ENCODE measurements at regions of chr1 and their contacts with region 1.

Region 1: GRCh38 chr1:210448297-210448892 is 119.7 kb downstream of the HHAT start:
- DNase-seq: peak; percentile 49
- ATAC-seq: no peak
- H3K4me3 Mint-ChIP-seq: no peak overlapping the region
- H3K27ac Mint-ChIP-seq: no peak overlapping the region
- H3K4me1 Mint-ChIP-seq: peaks cover 28% of the 10 kb centered on the region
- H3K27me3 Mint-ChIP-seq: peaks cover 2% of the 10 kb centered on the region

Region 2: DNA sequence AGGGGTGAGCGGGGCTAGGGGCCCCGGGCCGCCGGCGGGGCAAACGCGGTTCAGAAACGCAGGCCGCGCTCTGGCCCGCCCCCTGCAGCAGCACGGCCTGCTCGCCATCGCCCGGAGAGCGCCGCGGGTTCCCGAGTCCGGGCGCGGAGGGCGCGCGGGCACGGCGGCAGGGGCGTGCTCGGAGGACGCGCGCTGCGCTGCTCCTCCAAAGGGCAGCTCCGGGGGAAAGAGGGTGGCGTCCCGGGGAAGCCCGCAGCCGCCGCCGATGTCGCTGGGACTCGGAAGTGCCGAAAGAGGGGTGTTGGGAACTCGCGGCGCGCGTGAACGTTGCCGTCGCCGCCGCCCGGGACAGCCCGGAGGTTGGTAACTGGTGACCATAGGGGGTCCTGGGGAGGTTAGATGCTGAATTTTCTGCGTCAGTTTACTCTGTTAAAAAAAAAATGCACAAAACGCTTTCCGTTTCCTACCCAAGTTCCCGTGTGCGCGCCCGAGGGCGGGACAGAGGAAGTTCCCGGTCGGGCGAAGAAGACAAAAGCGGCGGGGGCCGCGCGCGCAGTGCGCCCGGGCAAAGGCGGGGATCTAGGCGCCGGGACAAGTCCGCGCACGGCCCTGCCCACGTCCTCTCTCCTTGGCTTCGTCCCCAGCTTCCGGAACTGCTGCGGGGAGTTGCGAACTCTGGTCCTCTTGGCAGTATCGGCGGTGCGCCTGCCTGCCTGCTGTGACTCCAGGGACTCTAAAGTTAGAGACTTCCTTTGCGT is 119.5 kb before region 1 on chr1 and contains the start of gene HHAT:
- CTCF ChIA-PET with region 1: interaction called, 7 read pairs
- POLR2A ChIA-PET with region 1: interaction called, 6 read pairs
- intact Hi-C with region 1: loop called in 1 of 2 experiments (anchors 1 kb)
- DNase-seq: peak; percentile 80
- ATAC-seq: peak; percentile 34
- H3K4me3 Mint-ChIP-seq: peak within 1 kb of the TSS; percentile 82
- H3K27ac Mint-ChIP-seq: peak within 1 kb of the TSS; percentile 95
- H3K4me1 Mint-ChIP-seq: peaks cover 36% of the 10 kb centered on the region
- H3K27me3 Mint-ChIP-seq: peaks cover 3% of the 10 kb centered on the region
- total RNA-seq, gene HHAT: 0.82 to 0.84 TPM

Region 3: DNA sequence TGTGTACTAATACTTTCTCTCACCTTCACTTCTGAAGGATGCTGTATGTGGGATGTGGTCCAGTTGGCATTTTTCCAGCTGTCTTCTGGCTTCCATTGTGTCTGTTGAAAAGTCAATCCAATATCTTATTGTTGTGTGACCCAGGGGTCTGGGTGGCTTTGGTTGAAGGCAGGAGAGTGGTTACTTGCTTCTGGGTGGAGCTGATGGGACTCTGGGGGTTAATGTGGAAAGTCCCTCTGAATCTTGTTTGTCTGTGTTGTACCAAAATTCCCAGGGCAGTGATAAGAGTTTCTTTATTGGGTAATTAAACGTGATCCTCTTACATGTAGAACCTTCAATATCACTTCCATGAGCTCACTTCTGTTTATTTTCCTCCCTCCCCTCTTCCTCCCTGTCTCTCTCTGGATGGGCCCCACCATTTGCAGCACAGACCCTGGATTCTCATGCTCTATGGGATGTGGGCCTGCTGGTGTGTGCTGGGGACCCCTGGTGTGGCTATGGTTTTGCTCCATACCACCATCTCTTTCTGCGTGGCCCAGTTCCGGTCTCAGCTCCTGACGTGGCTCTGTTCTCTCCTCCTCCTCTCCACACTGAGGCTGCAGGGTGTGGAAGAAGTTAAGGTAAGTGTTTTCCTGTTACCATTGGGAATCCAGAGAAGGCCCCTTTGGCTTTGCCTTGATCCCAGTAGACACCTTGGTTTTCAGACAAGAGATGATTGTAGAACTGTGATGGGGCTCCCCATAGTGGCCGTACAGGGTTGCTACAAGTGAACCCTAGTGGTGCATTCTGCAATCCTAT is 48.2 kb before region 1 on chr1:
- CTCF ChIA-PET with region 1: interaction called, 28 read pairs
- POLR2A ChIA-PET with region 1: no interaction called
- intact Hi-C with region 1: loop called in 1 of 2 experiments (anchors 1 kb)
- DNase-seq: peak; percentile 76
- ATAC-seq: peak; percentile 79
- H3K4me3 Mint-ChIP-seq: no peak overlapping the region
- H3K27ac Mint-ChIP-seq: peak overlapping the region; percentile 94
- H3K4me1 Mint-ChIP-seq: peaks cover 44% of the 10 kb centered on the region
- H3K27me3 Mint-ChIP-seq: peaks cover 8% of the 10 kb centered on the region

Region 4: DNA sequence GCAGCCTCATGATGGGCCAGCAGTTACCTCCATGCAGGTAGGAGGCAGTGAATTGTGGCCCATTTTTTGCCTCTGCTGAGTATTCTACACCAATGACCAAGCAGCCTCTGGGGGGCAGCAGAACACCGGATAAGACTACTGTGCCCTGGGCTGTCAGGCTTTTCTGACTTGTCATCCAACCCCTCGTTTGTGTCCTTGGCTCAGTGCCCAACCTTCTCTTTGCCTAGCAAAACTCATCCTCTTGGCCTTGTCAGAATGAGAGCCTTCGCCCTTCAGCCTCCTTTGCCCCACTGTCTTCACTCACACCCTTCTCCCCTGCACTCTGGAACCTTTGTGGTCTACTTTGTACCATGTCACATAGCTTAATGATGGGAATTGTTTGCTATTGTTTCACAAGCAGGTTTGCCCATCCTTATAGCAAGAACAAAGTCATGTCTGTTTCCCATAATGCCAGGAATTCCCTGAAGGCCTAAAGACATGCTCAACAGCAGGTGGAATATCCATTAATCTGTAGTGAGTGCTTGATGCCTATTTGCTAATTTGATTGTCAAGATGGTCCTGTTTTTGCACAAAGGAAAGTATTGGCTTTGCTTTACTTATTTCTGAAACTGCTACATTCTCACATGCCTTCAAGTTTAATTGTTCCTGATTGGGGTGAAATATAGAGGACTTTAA is 136.2 kb after region 1 on chr1:
- CTCF ChIA-PET with region 1: interaction called, 5 read pairs
- POLR2A ChIA-PET with region 1: no interaction called
- intact Hi-C with region 1: loop called (anchors 2 kb)
- DNase-seq: peak; percentile 91
- ATAC-seq: peak; percentile 96
- H3K4me3 Mint-ChIP-seq: no peak overlapping the region
- H3K27ac Mint-ChIP-seq: no peak overlapping the region
- H3K4me1 Mint-ChIP-seq: peaks cover 7% of the 10 kb centered on the region
- H3K27me3 Mint-ChIP-seq: no peaks in the 10 kb centered on the region

Region 5: GRCh38 chr1:210663730-210664573 is 215.6 kb after region 1 on chr1:
- CTCF ChIA-PET with region 1: no interaction called
- POLR2A ChIA-PET with region 1: no interaction called
- intact Hi-C with region 1: no loop called
- DNase-seq: no peak
- ATAC-seq: no peak
- H3K4me3 Mint-ChIP-seq: no peak overlapping the region
- H3K27ac Mint-ChIP-seq: no peak overlapping the region
- H3K4me1 Mint-ChIP-seq: no peaks in the 10 kb centered on the region
- H3K27me3 Mint-ChIP-seq: no peaks in the 10 kb centered on the region

Region 6: DNA sequence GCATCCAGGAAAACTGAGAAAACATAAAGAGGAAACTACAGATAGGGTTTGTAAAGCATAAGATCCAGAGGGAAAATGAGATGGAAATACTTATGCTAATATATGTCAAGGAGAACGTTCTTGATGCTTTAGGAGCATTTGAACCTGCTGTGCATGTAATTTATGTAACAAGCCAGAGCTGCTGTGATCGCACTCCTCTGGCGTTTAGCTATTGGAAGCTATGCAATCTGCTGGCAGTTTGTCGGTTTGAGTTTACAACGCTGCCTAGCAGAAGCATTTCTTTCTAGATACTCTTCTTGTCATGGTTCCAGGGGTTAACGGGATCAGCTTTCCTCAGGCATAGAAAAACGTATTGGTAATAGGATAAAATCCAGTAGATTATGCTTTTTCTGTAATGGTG is 502.9 kb after region 1 on chr1:
- CTCF ChIA-PET with region 1: no interaction called
- POLR2A ChIA-PET with region 1: no interaction called
- intact Hi-C with region 1: loop called in 1 of 2 experiments (anchors 2 kb)
- DNase-seq: no peak
- ATAC-seq: no peak
- H3K4me3 Mint-ChIP-seq: no peak overlapping the region
- H3K27ac Mint-ChIP-seq: no peak overlapping the region
- H3K4me1 Mint-ChIP-seq: no peaks in the 10 kb centered on the region
- H3K27me3 Mint-ChIP-seq: peaks cover 6% of the 10 kb centered on the region

Region 7: DNA sequence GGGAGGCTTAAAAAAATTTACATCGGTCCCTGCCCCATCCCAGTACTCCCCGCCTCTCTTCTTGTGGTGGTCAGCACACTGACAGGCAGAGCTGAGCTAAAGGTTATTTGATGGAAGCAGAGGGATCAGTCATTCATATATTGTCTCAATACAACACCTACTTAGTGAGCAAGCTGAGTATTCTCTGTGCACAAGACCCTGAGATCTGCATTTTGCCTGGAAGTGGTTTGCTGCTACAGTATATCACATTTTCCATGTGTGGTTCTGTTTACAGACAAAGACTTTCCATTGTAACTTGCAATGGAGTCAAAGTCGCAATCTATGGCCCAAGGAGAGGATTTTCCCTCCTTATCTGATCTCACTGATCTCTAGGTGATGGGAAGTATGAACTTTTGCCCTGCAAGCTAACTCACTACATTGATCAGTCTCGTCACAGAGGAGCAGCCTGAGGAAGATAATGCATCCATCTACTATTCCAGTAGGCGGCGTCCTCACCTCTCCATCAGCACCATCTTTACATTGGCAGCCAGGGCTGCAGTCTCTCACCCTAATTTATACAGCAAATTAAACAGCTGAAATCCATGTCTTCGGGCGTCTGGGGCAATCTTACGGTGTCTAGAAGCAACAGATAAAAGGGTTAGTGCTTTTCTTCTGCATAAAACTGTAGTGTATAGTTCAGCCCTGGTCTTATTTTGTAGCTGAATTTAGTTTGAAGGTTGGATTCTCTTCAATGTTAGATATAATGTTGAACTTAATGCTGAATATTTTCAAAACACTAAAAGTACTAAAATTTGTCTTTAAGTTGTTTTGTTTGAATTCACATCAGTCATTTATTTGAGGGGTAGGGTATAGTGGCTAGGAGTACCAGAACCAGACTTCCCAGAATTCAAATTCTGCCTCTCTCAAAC is 875.0 kb after region 1 on chr1:
- CTCF ChIA-PET with region 1: no interaction called
- POLR2A ChIA-PET with region 1: no interaction called
- intact Hi-C with region 1: loop called in 1 of 2 experiments (anchors 1 kb)
- DNase-seq: peak; percentile 81
- ATAC-seq: peak; percentile 83
- H3K4me3 Mint-ChIP-seq: no peak overlapping the region
- H3K27ac Mint-ChIP-seq: peak overlapping the region; percentile 42
- H3K4me1 Mint-ChIP-seq: peaks cover 69% of the 10 kb centered on the region
- H3K27me3 Mint-ChIP-seq: no peaks in the 10 kb centered on the region

Region 8: DNA sequence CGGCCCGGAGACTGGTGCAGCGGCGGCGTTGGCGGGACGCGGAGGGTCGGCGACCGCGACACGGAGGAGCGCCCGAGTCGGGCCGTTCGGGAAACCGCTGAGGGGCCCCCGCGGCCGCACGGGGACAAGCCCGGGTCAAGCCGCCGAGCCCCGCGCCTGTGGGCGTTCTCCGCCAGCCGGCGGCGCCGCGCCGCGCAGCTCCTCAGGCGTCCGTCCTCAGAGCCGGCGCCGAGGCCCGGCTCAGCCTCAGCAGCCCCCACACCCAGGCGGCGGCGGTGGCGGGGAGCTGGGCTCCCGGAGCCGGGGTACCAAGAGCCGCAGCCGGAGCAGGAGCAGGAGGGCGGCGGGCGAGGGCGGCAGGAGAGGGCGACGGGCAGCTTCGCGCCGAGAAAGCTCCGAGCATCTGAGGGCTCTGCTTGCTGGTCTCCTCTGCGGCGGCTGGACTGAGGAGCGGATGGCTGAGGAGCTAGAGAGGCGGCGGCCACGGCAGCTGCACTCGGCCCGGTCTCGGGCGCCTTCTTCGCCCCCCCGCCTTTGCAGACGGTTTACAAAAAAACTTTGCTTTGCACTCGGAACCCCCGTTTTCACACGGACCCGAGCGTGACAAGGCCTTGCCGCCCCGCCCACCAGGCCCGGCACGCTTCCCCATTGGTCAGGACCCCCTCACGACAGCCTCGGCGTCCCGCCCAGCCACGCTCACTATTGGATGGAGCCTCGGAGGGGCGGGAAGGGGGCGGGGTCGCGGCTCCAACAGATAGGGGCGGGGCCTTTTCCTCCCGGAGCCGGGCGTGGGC is 1130.4 kb after region 1 on chr1 and contains the start of gene SLC30A1:
- CTCF ChIA-PET with region 1: no interaction called
- POLR2A ChIA-PET with region 1: no interaction called
- intact Hi-C with region 1: loop called in 1 of 2 experiments (anchors 2 kb)
- DNase-seq: peak; percentile 100
- ATAC-seq: peak; percentile 94
- H3K4me3 Mint-ChIP-seq: peak within 1 kb of the TSS; percentile 89
- H3K27ac Mint-ChIP-seq: peak within 1 kb of the TSS; percentile 85
- H3K4me1 Mint-ChIP-seq: peaks cover 31% of the 10 kb centered on the region
- H3K27me3 Mint-ChIP-seq: no peaks in the 10 kb centered on the region
- total RNA-seq, gene SLC30A1: 2.9 to 4.5 TPM